ENCODE measurements at regions of chr20 and their contacts with region 1.

Region 1: DNA sequence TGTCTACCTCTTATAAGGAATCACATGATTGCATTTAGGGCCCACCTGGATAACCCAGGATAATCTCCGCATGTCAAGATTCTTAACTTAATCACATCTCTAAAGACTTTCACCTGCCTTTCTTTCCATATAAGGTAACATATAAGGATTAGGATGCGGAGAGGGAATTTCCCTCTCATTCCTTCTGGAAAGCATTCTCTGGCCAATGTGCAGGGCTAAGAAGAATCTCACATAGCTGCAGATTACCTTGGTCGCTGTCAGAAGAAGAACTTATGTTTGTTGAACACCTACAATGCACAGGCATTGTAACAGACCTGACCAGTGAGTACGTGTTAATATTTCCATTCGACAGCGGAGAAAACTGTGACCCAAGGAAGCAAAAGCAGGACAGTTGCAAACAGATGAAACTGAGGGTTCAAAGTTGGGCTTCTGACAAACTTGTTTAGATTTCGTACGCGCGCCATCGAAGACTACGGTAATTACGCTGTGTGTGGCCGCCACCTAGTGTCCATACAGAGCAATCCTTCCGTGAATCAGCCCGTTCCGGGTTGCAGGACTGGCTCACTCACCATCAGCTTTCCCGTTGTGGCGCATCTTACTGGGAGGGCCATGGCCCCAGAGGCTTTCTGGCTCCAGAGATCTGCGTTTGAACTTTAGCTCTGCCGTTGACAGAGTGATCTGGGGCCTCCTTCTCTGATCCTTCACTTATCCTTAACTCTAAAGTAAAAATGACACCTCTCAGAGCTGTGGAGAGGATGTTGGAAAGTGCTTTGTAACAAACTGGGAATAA is 9.5 kb downstream of the C20orf202 start:
- DNase-seq: peak; percentile 83
- H3K4me3 ChIP-seq: no peak overlapping the region
- H3K27ac ChIP-seq: no peak overlapping the region
- H3K4me1 ChIP-seq: peaks cover 0 to 9% (median 6%) of the 10 kb centered on the region in 6 donors
- H3K27me3 ChIP-seq: peaks cover 0 to 35% (median 0%) of the 10 kb centered on the region in 7 donors
- CTCF ChIP-seq: peak; percentile 44 to 88 (median 77)
- POLR2A ChIP-seq: no peak

Region 2: GRCh38 chr20:822651-823573 is 389.9 kb before region 1 on chr20:
- intact Hi-C with region 1: loop called (anchors 5 kb)
- DNase-seq: no peak
- H3K4me3 ChIP-seq: no peak overlapping the region
- H3K27ac ChIP-seq: no peak overlapping the region
- H3K4me1 ChIP-seq: peaks cover 0 to 6% (median 3%) of the 10 kb centered on the region in 6 donors
- H3K27me3 ChIP-seq: no peaks in the 10 kb centered on the region
- CTCF ChIP-seq: no peak
- POLR2A ChIP-seq: no peak

Region 3: DNA sequence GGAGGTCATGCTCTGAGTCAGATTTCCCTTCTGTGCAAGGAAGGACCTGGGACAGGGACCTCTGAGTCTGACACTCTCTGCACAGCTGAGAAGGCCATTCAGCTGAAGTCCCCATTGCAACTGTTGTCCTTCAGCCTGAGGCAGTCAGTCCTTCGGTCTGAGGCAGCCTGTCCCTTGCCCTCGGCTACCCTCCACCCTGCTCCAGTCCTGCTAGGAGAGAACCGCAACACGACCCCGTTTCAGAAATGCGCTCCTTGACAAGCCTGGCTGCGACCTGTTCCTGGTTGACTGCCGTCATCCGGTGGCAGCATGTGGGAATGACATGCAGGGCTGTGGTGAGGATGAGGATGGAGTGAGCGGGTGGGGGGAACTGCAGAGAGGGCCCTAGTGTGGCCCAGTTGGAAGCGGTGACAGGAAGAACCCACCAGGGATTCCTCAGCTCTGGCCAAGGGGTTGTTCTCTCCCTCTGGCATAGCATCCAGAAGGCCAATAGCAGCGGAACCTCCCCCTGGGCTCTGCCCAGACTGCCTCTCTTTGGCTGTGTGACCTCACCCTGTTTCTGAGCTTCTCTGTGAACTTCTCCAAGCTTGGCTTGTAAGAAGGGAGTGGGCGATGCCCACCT is 256.4 kb before region 1 on chr20:
- intact Hi-C with region 1: loop called (anchors 10 kb)
- DNase-seq: peak; percentile 91
- H3K4me3 ChIP-seq: no peak overlapping the region
- H3K27ac ChIP-seq: no peak overlapping the region
- H3K4me1 ChIP-seq: peaks cover 0 to 15% (median 7%) of the 10 kb centered on the region in 6 donors
- H3K27me3 ChIP-seq: peaks cover 0 to 92% (median 21%) of the 10 kb centered on the region in 7 donors
- CTCF ChIP-seq: peak; percentile 92 to 99 (median 98)
- POLR2A ChIP-seq: no peak

Region 4: DNA sequence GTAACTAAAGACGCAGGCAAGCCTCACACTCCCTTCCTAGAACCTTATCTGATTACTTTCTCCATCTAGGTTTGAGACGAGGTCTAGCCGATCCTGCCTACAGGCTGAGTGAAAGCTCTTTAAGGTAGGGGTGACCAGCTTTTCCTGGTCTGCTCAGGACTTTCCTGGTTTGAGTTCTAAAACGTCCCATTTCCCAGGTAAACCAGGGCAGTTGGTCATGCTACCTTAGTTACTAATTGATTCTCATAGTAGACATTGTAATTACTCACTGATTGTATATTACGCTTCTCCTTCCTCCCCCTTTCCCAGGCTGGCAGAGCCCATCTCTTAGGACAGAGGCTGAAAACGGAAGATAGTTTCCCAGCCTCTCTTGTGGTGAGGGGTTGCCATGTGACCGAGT is 182.8 kb before region 1 on chr20:
- intact Hi-C with region 1: no loop called
- DNase-seq: no peak
- H3K4me3 ChIP-seq: no peak overlapping the region
- H3K27ac ChIP-seq: no peak overlapping the region
- H3K4me1 ChIP-seq: peaks cover 0 to 8% (median 0%) of the 10 kb centered on the region in 6 donors
- H3K27me3 ChIP-seq: peaks cover 0 to 2% (median 0%) of the 10 kb centered on the region in 7 donors
- CTCF ChIP-seq: no peak
- POLR2A ChIP-seq: no peak

Measured in spleen (tissue), 13 donors.